Aorta (tissue), 5 donors: ENCODE measurements at regions of chr10 and their contacts with region 1.

Region 1: DNA sequence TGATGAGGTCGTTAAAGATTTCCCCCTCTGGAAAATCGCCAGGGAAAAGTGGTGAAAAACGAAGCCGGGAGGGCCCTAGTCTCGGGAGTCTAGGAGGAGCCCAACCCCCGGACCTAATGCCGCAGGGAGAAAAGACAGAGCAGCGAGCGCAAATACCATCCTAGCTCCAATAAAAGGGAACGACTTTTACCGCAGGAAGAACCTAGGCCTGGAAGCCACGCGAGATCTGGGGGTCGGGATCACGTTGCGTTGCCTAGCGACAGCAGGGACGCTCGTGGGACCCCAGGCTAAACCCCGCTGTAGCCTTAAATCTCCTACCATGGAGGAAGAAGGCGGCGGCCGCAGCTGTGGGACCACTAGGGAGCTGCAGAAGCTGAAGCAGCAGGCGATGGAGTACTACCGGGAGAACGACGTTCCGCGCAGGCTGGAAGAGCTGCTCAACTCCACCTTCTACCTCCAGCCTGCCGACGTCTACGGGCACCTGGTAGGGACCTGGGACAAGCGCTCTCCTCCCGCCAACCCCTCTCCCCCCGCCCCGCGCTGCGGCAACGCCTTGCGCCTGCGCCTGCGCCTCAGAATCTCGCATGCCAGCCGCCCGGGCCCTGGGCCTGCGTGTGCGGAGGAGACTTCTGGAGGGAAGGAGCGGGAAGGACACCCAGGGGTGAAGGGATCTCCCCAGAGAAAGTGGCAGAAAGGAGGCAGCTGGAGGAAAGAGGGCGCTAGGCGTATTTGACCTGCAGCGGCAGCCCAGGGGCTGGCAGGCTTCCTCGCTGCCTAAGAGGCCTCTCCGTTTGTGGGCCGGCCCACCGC is at the start of gene ENO4:
- DNase-seq: peak; percentile 79 to 89
- ATAC-seq: peak; percentile 83
- H3K4me3 ChIP-seq: peak within 1 kb of the TSS; percentile 69
- H3K27ac ChIP-seq: no peak within 1 kb of the TSS
- H3K4me1 ChIP-seq: no peaks in the 10 kb centered on the region
- H3K27me3 ChIP-seq: no peaks in the 10 kb centered on the region
- total RNA-seq, gene ENO4: 0.51 TPM in 1 of 2 donors, not detected in the other

Region 2: GRCh38 chr10:116888380-116889055 is 39.1 kb after region 1 on chr10:
- intact Hi-C with region 1: loop called in 1 of 2 experiments (anchors 2 kb)
- DNase-seq: peak; percentile 74 to 81
- ATAC-seq: peak; percentile 82
- H3K4me3 ChIP-seq: no peak overlapping the region
- H3K27ac ChIP-seq: no peak overlapping the region
- H3K4me1 ChIP-seq: peaks cover 0 to 2% of the 10 kb centered on the region in 2 donors
- H3K27me3 ChIP-seq: no peaks in the 10 kb centered on the region

Region 3: DNA sequence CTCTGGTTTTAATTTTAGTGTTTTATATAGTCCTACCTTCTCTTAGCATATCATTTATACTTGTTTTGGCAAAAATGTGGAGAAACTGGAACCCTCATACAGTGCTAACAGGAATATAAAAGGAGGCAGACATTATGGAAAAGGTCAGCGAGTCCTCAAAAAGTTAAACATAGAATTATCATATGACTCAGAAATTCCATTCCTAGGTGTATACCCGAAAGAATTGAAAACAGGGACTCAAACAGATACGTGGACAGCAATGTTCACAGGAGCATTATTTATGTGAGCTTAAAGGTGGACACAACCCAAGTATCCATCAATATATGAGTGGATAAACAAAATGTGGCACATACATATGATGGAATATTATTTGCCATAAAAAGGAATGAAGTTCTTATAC is 237.1 kb after region 1 on chr10:
- intact Hi-C with region 1: no loop called
- DNase-seq: no peak
- ATAC-seq: no peak
- H3K4me3 ChIP-seq: no peak overlapping the region
- H3K27ac ChIP-seq: no peak overlapping the region
- H3K4me1 ChIP-seq: no peaks in the 10 kb centered on the region
- H3K27me3 ChIP-seq: peaks cover 0 to under 1% of the 10 kb centered on the region in 2 donors